CD8-positive, alpha-beta T cell (primary cell): ENCODE measurements at regions of chr3 and their contacts with region 1.

Region 1: DNA sequence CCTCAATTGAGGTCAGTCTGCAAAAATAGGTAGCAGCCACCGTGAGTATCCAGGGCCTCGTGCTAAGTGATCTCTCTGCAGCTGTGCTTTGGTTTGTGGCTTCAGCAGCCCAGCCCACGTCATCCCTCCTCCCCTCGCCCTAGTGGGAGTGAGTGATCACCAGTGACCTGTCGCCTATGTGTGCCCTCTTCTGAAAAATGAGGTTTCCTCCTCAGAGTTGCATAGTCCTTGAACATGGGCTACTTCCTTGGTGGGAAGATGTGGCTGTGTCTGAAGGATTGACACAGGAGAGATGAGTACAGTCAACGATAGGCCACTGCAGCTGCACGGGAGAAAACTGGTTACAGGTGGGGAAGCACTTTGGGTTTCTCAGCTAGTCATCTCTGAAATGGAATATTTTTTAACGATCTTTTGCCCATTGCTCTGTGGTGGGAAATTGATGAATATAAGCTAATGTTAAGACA is 144.8 kb upstream of the BHLHE40 start:
- DNase-seq: peak; percentile 47 to 89 (median 74)
- ATAC-seq: peak; percentile 46
- H3K4me3 ChIP-seq: peak overlapping the region in 1 of 2 experiments; percentile 7
- H3K4me3 Mint-ChIP-seq: peak overlapping the region; percentile 32
- H3K27ac ChIP-seq: peak overlapping the region in 1 of 2 experiments; percentile 9
- H3K27ac Mint-ChIP-seq: peak overlapping the region; percentile 82
- H3K4me1 ChIP-seq: peaks cover 61% of the 10 kb centered on the region
- H3K4me1 Mint-ChIP-seq: peaks cover 79% of the 10 kb centered on the region
- H3K27me3 ChIP-seq: no peaks in the 10 kb centered on the region
- H3K27me3 Mint-ChIP-seq: no peaks in the 10 kb centered on the region
- CTCF ChIP-seq: no peak

Region 2: DNA sequence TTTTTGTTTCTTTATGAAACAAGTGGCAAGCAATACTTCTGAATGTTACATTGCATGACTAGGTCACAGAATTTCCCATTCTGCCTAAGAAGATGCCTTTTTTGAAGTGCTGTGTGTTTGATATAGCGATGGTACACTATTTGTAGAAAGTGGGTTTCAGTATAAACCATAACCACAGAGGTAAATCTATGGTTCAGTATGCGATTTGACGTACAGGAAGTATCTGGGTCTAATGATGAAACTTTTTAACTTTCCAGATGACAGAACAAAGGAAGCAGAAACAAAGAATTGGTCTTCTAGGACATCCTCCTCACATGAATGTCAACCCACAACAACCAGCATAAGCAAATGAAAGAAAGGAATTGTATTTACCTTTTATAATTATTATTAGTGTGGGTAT is 11.4 kb after region 1 on chr3:
- CTCF ChIA-PET with region 1: interaction called, 3 read pairs
- POLR2A ChIA-PET with region 1: interaction called, 10 read pairs
- intact Hi-C with region 1: loop called (anchors 1 kb)
- DNase-seq: peak in 2 of 9 experiments; percentile 74 to 87
- ATAC-seq: peak; percentile 77
- H3K4me3 ChIP-seq: no peak overlapping the region
- H3K4me3 Mint-ChIP-seq: peak overlapping the region; percentile 38
- H3K27ac ChIP-seq: no peak overlapping the region
- H3K27ac Mint-ChIP-seq: peak overlapping the region; percentile 79
- H3K4me1 ChIP-seq: peaks cover 94% of the 10 kb centered on the region
- H3K4me1 Mint-ChIP-seq: peaks cover 87% of the 10 kb centered on the region
- H3K27me3 ChIP-seq: no peaks in the 10 kb centered on the region
- H3K27me3 Mint-ChIP-seq: no peaks in the 10 kb centered on the region
- CTCF ChIP-seq: no peak